Activated CD8-positive, alpha-beta memory T cell treated with anti-CD3 and anti-CD28 coated beads, Interleukin-2, amount 10 ng/mL, durations not matched to agents 7 days and 5 days (primary cell): ENCODE measurements at regions of chr7 and their contacts with region 1.

Region 1: DNA sequence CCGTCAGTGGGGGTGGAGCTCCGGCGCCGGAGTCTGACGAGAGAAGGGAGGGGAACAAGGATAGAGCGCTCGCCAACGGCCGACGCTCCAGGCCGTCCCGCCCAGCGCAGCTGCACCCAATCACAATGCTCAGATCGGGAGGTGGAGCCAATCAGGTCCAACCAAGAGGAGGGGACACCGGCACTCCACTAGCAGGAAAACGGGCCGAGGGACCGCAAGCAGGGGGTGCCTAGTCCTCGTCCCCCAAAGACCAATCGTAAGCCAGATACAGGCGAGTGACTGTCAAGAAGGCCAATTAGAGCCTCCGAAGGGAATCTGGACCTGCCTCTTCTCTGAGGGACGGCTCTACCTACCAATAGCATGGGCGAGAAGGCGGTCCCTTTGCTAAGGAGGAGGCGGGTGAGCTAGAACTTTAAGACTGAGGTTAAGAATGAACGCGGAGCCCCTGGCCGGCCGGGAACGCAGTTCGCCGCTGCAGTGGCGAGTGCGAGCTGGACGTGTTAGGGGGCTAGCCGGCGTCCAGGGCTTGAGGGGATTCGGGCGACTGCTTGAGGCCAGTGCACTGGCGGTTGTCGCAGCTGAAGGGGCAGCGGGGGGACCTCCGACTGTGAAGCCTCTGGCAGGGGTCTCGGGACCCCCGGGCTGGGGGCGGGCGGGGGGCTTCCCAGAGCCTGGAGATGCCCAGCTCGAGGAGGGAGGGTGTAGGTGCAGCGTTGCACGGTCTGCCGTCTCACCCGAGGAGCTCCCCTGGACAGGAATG is at the start of gene FBXO24:
- DNase-seq: peak; percentile 100
- ATAC-seq: peak; percentile 84
- H3K4me3 Mint-ChIP-seq: peak within 1 kb of the TSS; percentile 98
- H3K27ac Mint-ChIP-seq: peak within 1 kb of the TSS; percentile 97
- H3K4me1 Mint-ChIP-seq: peaks cover 23% of the 10 kb centered on the region
- H3K27me3 Mint-ChIP-seq: peaks cover 7% of the 10 kb centered on the region
- total RNA-seq, gene FBXO24: 0.80 to 1.3 TPM

Region 2: DNA sequence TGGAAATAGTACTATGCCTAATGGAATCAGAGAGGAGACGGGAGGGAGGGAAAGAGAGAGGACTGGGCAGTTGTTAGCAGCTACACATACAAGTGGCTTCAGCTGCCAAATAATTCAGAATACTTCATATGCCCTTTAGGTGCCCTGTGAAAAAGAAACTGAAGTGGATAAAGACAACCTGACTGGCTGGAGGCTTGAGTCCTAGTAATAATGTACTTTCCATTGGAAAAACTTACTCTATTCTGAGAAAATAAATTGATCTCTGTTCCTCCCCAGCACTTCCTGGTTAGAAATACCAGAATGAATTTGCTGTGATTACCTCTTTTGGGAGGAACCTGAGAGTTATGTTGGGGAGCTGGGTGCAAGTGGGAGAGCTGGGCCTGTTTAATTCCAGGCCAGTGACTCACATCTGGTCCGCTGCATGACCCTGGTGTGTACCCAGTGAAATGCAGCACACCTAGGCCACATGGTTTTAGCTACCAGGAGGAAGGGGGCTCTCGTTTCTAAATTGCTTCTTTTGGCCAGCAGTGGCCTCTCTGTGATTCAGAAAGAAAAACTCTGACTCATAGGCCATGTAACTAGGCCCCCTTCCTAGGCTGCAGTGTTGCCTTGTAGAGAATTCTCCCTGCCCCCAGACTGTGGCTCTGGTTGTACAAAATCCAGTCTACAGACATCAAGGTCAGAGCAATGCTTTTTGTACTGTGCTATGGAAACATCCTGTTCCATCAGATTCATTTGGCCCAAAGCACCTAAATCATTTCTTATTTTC is 40.9 kb before region 1 on chr7:
- CTCF ChIA-PET with region 1: interaction called, 10 read pairs
- DNase-seq: peak; percentile 81
- ATAC-seq: peak; percentile 67
- H3K4me3 Mint-ChIP-seq: peak overlapping the region; percentile 99
- H3K27ac Mint-ChIP-seq: peak overlapping the region; percentile 95
- H3K4me1 Mint-ChIP-seq: peaks cover 97% of the 10 kb centered on the region
- H3K27me3 Mint-ChIP-seq: no peaks in the 10 kb centered on the region

Region 3: GRCh38 chr7:100598425-100598824 is 12.0 kb after region 1 on chr7:
- CTCF ChIA-PET with region 1: interaction called, 17 read pairs
- DNase-seq: peak; percentile 60
- ATAC-seq: peak; percentile 48
- H3K4me3 Mint-ChIP-seq: no peak overlapping the region
- H3K27ac Mint-ChIP-seq: peak overlapping the region; percentile 33
- H3K4me1 Mint-ChIP-seq: peaks cover 14% of the 10 kb centered on the region
- H3K27me3 Mint-ChIP-seq: no peaks in the 10 kb centered on the region

Region 4: GRCh38 chr7:100611974-100612729 is 25.7 kb after region 1 on chr7 and contains the start of gene MOSPD3:
- CTCF ChIA-PET with region 1: interaction called, 20 read pairs
- DNase-seq: peak; percentile 99
- ATAC-seq: peak; percentile 95
- H3K4me3 Mint-ChIP-seq: peak within 1 kb of the TSS; percentile 87
- H3K27ac Mint-ChIP-seq: peak within 1 kb of the TSS; percentile 100
- H3K4me1 Mint-ChIP-seq: peaks cover 22% of the 10 kb centered on the region
- H3K27me3 Mint-ChIP-seq: no peaks in the 10 kb centered on the region
- total RNA-seq, gene MOSPD3: 22.2 to 28.8 TPM

Region 5: DNA sequence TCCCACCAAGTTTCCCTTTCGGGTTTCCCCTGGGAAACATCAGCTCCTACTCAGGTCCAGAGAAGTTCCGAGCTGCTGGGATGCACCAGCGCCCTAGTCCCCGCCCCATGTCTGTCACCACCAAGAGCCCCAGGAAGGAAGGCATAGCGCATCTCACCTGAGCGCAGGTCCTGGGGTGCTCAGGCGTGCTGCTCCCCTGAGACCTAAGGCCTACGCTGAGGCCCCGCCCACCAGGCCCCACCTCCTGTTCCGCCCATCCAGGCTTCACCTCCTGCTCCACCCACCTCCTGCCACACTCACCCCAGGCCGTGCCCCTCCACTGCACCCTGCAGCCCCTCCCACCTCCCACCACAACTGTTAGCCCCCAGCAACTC is 56.1 kb after region 1 on chr7:
- CTCF ChIA-PET with region 1: no interaction called
- DNase-seq: peak; percentile 58
- ATAC-seq: peak; percentile 81
- H3K4me3 Mint-ChIP-seq: no peak overlapping the region
- H3K27ac Mint-ChIP-seq: no peak overlapping the region
- H3K4me1 Mint-ChIP-seq: no peaks in the 10 kb centered on the region
- H3K27me3 Mint-ChIP-seq: peaks cover 9% of the 10 kb centered on the region

Region 6: GRCh38 chr7:100691676-100692577 is 105.5 kb after region 1 on chr7:
- CTCF ChIA-PET with region 1: interaction called, 16 read pairs
- DNase-seq: peak; percentile 86
- ATAC-seq: peak; percentile 76
- H3K4me3 Mint-ChIP-seq: peak overlapping the region; percentile 96
- H3K27ac Mint-ChIP-seq: peak overlapping the region; percentile 71
- H3K4me1 Mint-ChIP-seq: peaks cover 28% of the 10 kb centered on the region
- H3K27me3 Mint-ChIP-seq: peaks cover 13% of the 10 kb centered on the region